ENCODE measurements at regions of chr22 and their contacts with region 1.

Region 1: DNA sequence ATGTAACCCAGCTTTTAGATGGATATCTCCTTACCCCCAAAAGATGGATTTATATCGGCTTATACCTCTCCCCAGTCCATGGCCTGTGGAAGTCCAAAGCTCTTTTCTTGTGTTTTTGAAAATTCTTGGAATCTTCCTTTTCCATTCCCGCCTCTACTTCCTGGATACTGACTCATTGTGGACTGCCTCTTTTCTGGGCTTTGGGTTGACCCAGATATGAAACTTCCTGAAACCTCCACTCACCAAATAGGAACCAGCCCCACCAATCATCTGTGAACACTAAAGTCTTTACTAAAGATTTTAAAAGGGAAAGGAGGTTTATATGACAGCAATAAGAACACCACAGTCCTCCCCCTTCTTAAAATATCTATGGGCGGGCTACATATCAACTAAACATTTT is 163.4 kb upstream of the SYN3 start:
- DNase-seq: no peak
- ATAC-seq: peak in 3 of 4 donors; percentile 71 to 83 (median 81)
- H3K4me3 ChIP-seq: peak overlapping the region in 9 of 12 donors; percentile 19 to 45 (median 34)
- H3K27ac ChIP-seq: peak overlapping the region in 3 of 12 donors; percentile 1 to 43 (median 23)
- H3K4me1 ChIP-seq: peaks cover 0 to 6% (median 0%) of the 10 kb centered on the region in 12 donors
- H3K27me3 ChIP-seq: peaks cover 0 to 5% (median 0%) of the 10 kb centered on the region in 9 donors
- CTCF ChIP-seq: no peak
- POLR2A ChIP-seq: no peak

Region 2: GRCh38 chr22:33271390-33272161 is 50.0 kb after region 1 on chr22:
- intact Hi-C with region 1: loop called in 1 of 10 experiments (anchors 5 kb)
- DNase-seq: peak; percentile 57 to 75 (median 71)
- ATAC-seq: peak; percentile 65 to 84 (median 82)
- H3K4me3 ChIP-seq: no peak overlapping the region
- H3K27ac ChIP-seq: no peak overlapping the region
- H3K4me1 ChIP-seq: peaks cover 0 to 36% (median 15%) of the 10 kb centered on the region in 12 donors
- H3K27me3 ChIP-seq: no peaks in the 10 kb centered on the region
- CTCF ChIP-seq: peak in 2 of 12 donors; percentile 7 to 22
- POLR2A ChIP-seq: no peak

Measured in heart left ventricle (tissue), 16 donors.